A673 (cell line): ENCODE measurements at regions of chr10 and their contacts with region 1.

Region 1: DNA sequence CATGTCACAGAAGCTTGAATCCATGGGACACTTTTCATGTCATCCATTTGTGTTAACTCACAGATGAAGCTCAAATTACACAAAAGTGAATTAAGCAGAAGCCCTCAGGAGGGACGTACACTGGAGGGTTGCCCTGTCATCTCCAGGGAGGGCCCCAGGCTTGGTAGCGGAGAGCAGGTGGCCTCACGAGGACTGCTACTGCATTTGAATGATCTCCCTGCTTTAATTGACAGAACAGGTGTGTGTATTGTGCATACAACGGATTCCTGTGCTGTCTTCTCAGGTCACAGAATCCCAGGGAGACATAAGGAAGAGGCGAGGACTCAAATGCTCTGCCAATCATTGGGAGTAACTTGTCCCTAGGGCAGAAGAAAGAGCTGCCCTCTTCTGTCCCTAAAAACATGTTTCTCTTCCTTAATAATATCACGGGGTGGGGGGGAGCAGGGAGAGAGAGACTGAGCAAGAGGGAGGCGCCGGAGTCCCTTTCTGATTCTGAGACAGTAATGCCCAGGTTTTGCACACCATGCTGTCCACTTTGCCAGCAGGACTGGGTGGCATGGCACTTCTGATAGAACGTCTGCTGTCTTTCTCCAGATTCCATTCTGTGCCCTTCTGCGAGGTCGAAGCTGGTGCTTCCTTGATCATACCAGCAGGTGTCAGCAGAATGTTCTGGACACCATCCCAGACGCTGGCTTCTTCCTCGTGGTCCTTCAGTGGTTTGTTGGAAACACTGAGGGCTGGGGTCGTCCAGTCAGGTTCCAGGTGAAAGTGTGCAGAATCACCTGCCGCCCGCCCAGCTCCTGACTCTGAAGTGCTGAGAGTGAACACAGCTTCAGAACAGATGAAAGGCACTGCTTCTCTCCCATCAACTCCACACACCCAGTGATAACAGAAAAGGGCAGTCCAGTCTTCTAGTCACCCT is 26.2 kb upstream of the RASGEF1A start:
- DNase-seq: peak; percentile 52
- H3K4me3 ChIP-seq: no peak overlapping the region
- H3K27ac ChIP-seq: no peak overlapping the region
- H3K4me1 ChIP-seq: no peaks in the 10 kb centered on the region
- H3K27me3 ChIP-seq: peaks cover 8% of the 10 kb centered on the region
- CTCF ChIP-seq: peak; percentile 72

Region 2: GRCh38 chr10:42753126-42753506 is 539.9 kb before region 1 on chr10:
- CTCF ChIA-PET with region 1: no interaction called
- POLR2A ChIA-PET with region 1: no interaction called
- intact Hi-C with region 1: no loop called
- DNase-seq: peak; percentile 85
- H3K4me3 ChIP-seq: peak overlapping the region; percentile 45
- H3K27ac ChIP-seq: no peak overlapping the region
- H3K4me1 ChIP-seq: peaks cover 13% of the 10 kb centered on the region
- H3K27me3 ChIP-seq: peaks cover 39% of the 10 kb centered on the region
- CTCF ChIP-seq: peak; percentile 85

Region 3: GRCh38 chr10:43348511-43349312 is 55.7 kb after region 1 on chr10:
- CTCF ChIA-PET with region 1: no interaction called
- POLR2A ChIA-PET with region 1: no interaction called
- intact Hi-C with region 1: loop called (anchors 1 kb)
- DNase-seq: peak; percentile 86
- H3K4me3 ChIP-seq: no peak overlapping the region
- H3K27ac ChIP-seq: no peak overlapping the region
- H3K4me1 ChIP-seq: peaks cover 2% of the 10 kb centered on the region
- H3K27me3 ChIP-seq: no peaks in the 10 kb centered on the region
- CTCF ChIP-seq: peak; percentile 98

Region 4: DNA sequence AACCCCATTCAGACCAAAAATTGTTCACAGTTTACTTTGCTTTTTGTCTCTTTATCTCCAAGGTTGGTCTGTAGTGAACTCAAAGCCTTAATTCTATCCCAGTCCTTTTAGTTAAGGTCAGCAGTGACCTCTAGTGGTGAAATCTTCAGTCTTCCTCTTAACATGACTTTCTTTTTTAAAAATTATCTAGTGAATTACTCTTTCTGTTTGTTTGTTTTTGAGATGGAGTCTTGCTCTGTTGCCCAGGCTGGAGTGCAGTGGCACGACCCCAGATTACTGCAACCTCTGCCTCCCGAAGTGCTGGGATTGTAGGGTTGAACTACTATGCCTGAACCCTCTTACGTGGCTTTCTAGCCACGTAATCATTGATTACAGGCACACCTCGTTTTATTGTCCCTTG is 168.9 kb after region 1 on chr10:
- CTCF ChIA-PET with region 1: interaction called, 5 read pairs
- POLR2A ChIA-PET with region 1: no interaction called
- intact Hi-C with region 1: loop called (anchors 1 kb)
- DNase-seq: peak; percentile 85
- H3K4me3 ChIP-seq: no peak overlapping the region
- H3K27ac ChIP-seq: no peak overlapping the region
- H3K4me1 ChIP-seq: no peaks in the 10 kb centered on the region
- H3K27me3 ChIP-seq: no peaks in the 10 kb centered on the region
- CTCF ChIP-seq: peak; percentile 75